IMR-90 (cell line): ENCODE measurements at regions of chr1 and their contacts with region 1.

Region 1: GRCh38 chr1:40849801-40850592 is 12.2 kb downstream of the CITED4 start:
- DNase-seq: peak; percentile 49
- ATAC-seq: peak; percentile 91
- H3K4me3 ChIP-seq: no peak overlapping the region
- H3K27ac ChIP-seq: no peak overlapping the region
- H3K4me1 ChIP-seq: no peaks in the 10 kb centered on the region
- H3K27me3 ChIP-seq: peaks cover 2% of the 10 kb centered on the region; the same call in 1 of the 2 replicates
- CTCF ChIP-seq: peak; percentile 87
- POLR2A ChIP-seq: no peak
- RAD21 ChIP-seq: peak; percentile 87

Region 2: GRCh38 chr1:40531381-40532061 is 318.5 kb before region 1 on chr1 and contains the start of gene ZNF684:
- CTCF ChIA-PET with region 1: no interaction called
- POLR2A ChIA-PET with region 1: no interaction called
- dilution Hi-C with region 1: no loop called
- in situ Hi-C with region 1: no loop called
- intact Hi-C with region 1: loop called (anchors 5 kb)
- DNase-seq: peak; percentile 95
- ATAC-seq: peak; percentile 99
- H3K4me3 ChIP-seq: peak within 1 kb of the TSS; percentile 73
- H3K27ac ChIP-seq: peak within 1 kb of the TSS; percentile 54
- H3K4me1 ChIP-seq: no peaks in the 10 kb centered on the region
- H3K27me3 ChIP-seq: no peaks in the 10 kb centered on the region
- CTCF ChIP-seq: no peak
- POLR2A ChIP-seq: peak; percentile 58; the same call in 1 of the 2 replicates
- RAD21 ChIP-seq: no peak
- total RNA-seq, gene ZNF684: 4.1 and 5.0 TPM in 2 replicates

Region 3: DNA sequence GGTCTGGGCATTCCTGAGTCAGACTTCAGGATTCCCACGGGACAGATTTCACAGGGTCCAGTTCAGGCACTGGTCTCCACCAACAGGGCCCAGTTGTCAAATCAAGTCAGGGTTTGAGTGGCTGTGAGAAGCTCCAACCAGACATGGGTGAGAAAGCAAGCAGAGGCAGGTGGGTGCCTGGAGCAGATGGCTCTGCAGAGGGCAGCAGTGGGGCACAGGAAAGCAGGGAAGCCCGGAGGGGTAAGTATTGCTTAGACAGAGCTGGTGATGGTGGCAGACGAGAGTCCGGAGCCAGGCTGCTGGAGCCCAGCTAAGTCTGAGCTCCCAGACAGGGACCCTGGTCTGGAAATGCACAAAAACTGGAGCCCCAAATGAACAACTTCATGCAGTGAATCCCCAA is 224.9 kb before region 1 on chr1:
- CTCF ChIA-PET with region 1: no interaction called
- POLR2A ChIA-PET with region 1: no interaction called
- dilution Hi-C with region 1: no loop called
- in situ Hi-C with region 1: loop called (anchors 10 kb)
- intact Hi-C with region 1: loop called (anchors 5 kb)
- DNase-seq: no peak
- ATAC-seq: peak; percentile 64
- H3K4me3 ChIP-seq: no peak overlapping the region
- H3K27ac ChIP-seq: no peak overlapping the region
- H3K4me1 ChIP-seq: no peaks in the 10 kb centered on the region
- H3K27me3 ChIP-seq: peaks cover 34% of the 10 kb centered on the region
- CTCF ChIP-seq: peak; percentile 37
- POLR2A ChIP-seq: no peak
- RAD21 ChIP-seq: peak; percentile 41

Region 4: DNA sequence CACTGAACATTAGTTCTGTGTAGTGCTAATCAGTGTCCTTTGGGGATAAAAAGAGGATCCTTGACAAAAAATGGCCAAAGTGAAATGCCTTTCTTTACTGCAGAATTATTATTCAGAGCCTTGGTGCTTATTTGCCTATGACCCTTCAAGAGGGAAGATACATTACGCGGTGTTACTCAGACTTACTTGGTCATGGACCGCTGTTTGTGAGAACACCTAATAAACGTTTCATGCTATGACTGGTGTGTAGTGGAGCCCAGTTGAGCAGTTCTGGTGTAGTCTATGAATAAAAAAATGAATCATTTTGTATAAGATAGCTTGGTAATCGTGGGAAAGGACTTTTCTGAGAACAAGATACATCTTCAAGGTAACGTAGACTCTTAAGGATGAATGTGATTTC is 150.2 kb before region 1 on chr1:
- CTCF ChIA-PET with region 1: no interaction called
- POLR2A ChIA-PET with region 1: no interaction called
- dilution Hi-C with region 1: no loop called
- in situ Hi-C with region 1: no loop called
- intact Hi-C with region 1: no loop called
- DNase-seq: no peak
- ATAC-seq: no peak
- H3K4me3 ChIP-seq: no peak overlapping the region
- H3K27ac ChIP-seq: no peak overlapping the region
- H3K4me1 ChIP-seq: no peaks in the 10 kb centered on the region
- H3K27me3 ChIP-seq: no peaks in the 10 kb centered on the region
- CTCF ChIP-seq: no peak
- POLR2A ChIP-seq: no peak
- RAD21 ChIP-seq: no peak

Region 5: DNA sequence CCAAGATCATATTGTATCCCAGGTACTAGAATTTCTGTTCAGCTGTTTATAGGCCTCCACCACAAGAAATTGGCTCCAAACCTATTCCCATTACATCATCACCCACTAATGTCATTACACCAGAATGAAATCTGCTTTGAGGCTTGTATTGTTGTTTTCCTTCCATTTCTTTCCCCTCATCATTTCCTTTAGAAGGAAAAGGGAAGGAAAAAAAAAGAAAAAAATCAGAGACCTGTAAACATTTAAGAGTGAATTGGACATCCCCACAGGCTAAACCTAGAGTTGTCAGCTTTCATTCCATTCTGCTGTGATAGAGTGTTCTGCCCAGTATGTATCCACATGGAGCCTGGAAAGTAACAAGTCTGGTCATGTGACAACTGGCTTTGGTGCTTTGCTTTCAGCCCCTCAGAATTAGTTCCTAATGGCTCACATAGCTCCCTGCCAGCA is 113.9 kb before region 1 on chr1:
- CTCF ChIA-PET with region 1: no interaction called
- POLR2A ChIA-PET with region 1: no interaction called
- dilution Hi-C with region 1: no loop called
- in situ Hi-C with region 1: no loop called
- intact Hi-C with region 1: no loop called
- DNase-seq: peak; percentile 82
- ATAC-seq: no peak
- H3K4me3 ChIP-seq: no peak overlapping the region
- H3K27ac ChIP-seq: no peak overlapping the region
- H3K4me1 ChIP-seq: peaks cover 5% of the 10 kb centered on the region
- H3K27me3 ChIP-seq: no peaks in the 10 kb centered on the region
- CTCF ChIP-seq: no peak
- POLR2A ChIP-seq: no peak
- RAD21 ChIP-seq: no peak

Region 6: DNA sequence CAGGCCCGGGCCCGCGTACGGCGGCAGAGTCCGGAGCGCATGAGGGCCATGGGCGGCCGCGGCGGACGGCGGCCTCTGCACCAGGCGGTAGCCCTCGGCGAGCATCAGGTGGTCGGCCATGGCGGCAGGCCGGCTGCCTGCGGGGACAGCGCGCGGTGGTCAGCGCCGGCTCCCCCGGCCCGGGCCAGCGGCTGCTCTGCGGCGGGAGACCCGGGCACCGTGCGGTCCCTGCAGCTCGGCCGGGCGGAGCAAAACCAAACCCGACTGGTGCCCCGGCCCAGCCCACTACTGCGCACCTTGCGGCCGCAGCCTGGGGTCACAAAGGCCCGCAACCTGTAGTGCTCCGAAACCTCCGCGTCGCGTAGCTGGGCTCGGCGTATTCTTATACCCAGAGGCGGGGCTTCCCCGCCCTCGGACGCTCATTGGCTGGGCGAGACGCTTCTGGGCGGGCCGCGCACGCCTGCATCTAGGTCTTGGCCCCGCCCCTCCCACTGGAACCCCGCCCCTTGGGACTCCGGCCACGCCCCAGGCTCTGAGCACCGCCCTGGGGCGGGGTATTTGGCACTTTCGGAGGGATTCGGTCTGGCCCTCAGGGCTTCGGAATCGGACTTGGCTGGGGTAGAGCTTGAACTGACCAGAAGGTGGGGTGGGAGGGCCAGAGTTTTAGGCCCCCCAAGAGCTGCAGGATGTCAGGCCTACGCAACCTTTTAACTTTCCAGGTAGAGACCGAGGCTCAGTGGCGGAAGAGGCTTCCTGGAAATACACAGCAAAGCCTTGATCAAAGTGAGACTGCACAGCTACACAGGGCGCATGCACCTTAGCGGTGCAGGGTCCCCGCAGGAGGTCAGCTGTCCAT is 12.2 kb after region 1 on chr1 and contains the start of gene CITED4:
- CTCF ChIA-PET with region 1: interaction called, 10 read pairs
- POLR2A ChIA-PET with region 1: no interaction called
- dilution Hi-C with region 1: no loop called
- in situ Hi-C with region 1: no loop called
- intact Hi-C with region 1: no loop called
- DNase-seq: peak; percentile 83
- ATAC-seq: peak; percentile 98
- H3K4me3 ChIP-seq: peak within 1 kb of the TSS; percentile 76
- H3K27ac ChIP-seq: no peak within 1 kb of the TSS; the same call in 1 of the 2 replicates
- H3K4me1 ChIP-seq: peaks cover 10% of the 10 kb centered on the region
- H3K27me3 ChIP-seq: peaks cover 18% of the 10 kb centered on the region; the same call in 1 of the 2 replicates
- CTCF ChIP-seq: peak; percentile 29; the same call in 1 of the 2 replicates
- POLR2A ChIP-seq: peak; percentile 62; the same call in 1 of the 2 replicates
- RAD21 ChIP-seq: peak; percentile 36; the same call in 1 of the 2 replicates
- total RNA-seq, gene CITED4: under 0.01 and 0.28 TPM in 2 replicates

Region 7: DNA sequence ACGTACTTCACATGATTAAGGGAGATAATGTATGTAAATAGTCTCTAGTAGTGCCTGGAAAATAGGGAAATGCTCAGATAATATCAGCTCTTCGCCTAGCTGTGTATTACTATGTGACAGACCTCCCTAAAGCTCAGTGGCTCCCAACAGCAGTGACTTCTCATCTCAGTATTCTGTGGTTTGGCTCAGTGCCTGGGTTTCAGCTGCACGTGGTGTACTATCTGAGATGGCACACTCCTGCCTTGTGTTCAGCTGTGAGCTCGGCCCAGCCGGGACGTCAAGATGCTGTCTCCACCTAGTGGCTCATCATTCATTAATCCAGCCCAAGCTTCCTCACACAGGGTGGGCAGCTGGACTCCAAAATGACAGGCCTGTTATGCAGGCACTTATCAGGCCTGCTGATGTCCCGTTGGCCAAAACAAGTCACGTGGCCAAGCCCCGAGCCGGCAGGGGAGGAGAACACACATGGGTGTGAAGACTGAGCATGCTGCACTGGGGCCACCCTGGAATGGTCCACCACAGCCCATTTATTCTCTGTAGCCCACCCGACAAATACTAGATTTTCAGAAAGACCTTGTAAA is 153.7 kb after region 1 on chr1:
- CTCF ChIA-PET with region 1: interaction called, 6 read pairs
- POLR2A ChIA-PET with region 1: no interaction called
- dilution Hi-C with region 1: no loop called
- in situ Hi-C with region 1: no loop called
- intact Hi-C with region 1: loop called (anchors 1 kb)
- DNase-seq: peak; percentile 100
- ATAC-seq: peak; percentile 96
- H3K4me3 ChIP-seq: no peak overlapping the region
- H3K27ac ChIP-seq: no peak overlapping the region
- H3K4me1 ChIP-seq: peaks cover 14% of the 10 kb centered on the region
- H3K27me3 ChIP-seq: no peaks in the 10 kb centered on the region
- CTCF ChIP-seq: peak; percentile 68
- POLR2A ChIP-seq: no peak
- RAD21 ChIP-seq: peak; percentile 61